ENCODE measurements at regions of chr1 and their contacts with region 1.

Region 1: DNA sequence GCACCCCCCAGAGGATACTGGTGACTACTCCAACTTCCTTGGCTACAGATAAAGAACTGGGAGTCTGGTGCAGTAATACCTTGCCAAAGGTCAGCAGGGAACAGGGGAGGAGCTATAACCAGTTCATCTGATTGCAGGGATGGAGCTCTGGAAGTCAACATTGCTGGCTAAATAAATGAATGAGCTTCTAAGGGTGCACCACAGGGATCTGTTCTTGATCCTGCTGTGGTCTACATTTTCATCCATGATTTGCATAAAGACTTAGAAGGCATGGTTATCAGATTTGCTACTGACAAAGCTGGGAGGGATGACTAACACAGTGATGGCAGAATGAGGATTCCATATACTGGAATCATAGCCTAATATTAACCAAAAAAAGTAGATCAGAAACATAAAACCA is 18.3 kb downstream of the PLEKHA6 start:
- DNase-seq: no peak
- H3K4me3 ChIP-seq: no peak overlapping the region
- H3K27ac ChIP-seq: peak overlapping the region in 1 of 2 experiments; percentile 23; a peak in 1 of 4 replicates
- H3K4me1 ChIP-seq: peaks cover 0 to 75% of the 10 kb centered on the region in 2 experiments; a peak in 2 of 4 replicates
- H3K27me3 ChIP-seq: no peaks in the 10 kb centered on the region; the same call in 1 of the 2 replicates
- CTCF ChIP-seq: no peak
- EP300 ChIP-seq: no peak
- RAD21 ChIP-seq: no peak

Region 2: GRCh38 chr1:204257954-204258752 is 83.2 kb before region 1 on chr1:
- CTCF ChIA-PET with region 1: interaction called, 17 read pairs
- POLR2A ChIA-PET with region 1: no interaction called
- DNase-seq: peak; percentile 88
- H3K4me3 ChIP-seq: no peak overlapping the region
- H3K27ac ChIP-seq: peak overlapping the region in 1 of 2 experiments; percentile 67; a peak in 2 of 4 replicates
- H3K4me1 ChIP-seq: peaks cover 0 to 28% of the 10 kb centered on the region in 2 experiments; a peak in 2 of 4 replicates
- H3K27me3 ChIP-seq: no peaks in the 10 kb centered on the region; the same call in 1 of the 2 replicates
- CTCF ChIP-seq: peak; percentile 73
- EP300 ChIP-seq: no peak
- RAD21 ChIP-seq: peak; percentile 80

Region 3: GRCh38 chr1:204357551-204358490 is 16.4 kb after region 1 on chr1:
- CTCF ChIA-PET with region 1: interaction called, 75 read pairs
- POLR2A ChIA-PET with region 1: interaction called, 8 read pairs
- DNase-seq: peak; percentile 70
- H3K4me3 ChIP-seq: peak overlapping the region in 1 of 2 experiments; percentile 21; a peak in 1 of 4 replicates
- H3K27ac ChIP-seq: peak overlapping the region in 1 of 2 experiments; percentile 90; a peak in 2 of 4 replicates
- H3K4me1 ChIP-seq: peaks cover 0 to 45% of the 10 kb centered on the region in 2 experiments; a peak in 1 of 4 replicates
- H3K27me3 ChIP-seq: no peaks in the 10 kb centered on the region
- CTCF ChIP-seq: no peak
- EP300 ChIP-seq: no peak
- RAD21 ChIP-seq: peak; percentile 31